ENCODE measurements at regions of chrX and their contacts with region 1.

Region 1: DNA sequence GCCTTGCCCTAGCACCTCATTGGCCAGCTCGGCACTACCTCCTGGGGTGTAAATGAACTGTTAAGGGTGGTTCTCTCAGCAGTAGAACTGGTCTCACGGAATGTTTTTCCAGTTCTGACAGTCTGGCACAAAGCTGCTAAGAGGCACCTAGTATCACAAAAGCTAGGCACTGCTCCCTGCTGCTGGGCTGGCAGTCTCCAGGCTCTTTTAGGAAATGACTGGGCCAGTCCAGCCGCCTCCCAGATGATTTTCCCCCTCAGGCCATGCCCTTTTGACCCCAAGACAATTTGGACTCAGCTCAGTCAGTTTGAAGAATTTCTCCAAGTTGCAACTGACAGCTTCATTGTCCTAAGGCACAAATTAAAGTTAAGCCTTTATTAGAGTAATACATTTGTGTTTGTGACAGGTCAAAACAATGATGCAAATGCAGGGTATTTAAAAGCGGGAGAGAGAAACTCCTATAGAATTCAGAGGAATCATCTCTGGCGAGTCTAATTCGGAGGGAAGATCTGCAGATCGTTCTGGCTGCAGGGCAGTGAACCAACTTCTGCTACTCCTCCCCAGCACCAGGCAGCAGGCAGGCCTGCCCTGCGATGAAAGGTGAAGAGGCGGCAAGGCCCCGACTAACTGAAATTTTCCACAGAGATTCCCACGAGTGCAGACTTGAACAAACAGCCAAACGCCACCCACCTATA is 7.9 kb downstream of the FRMD7 start:
- DNase-seq: no peak
- H3K4me3 ChIP-seq: no peak overlapping the region
- H3K27ac ChIP-seq: no peak overlapping the region
- H3K4me1 ChIP-seq: no peaks in the 10 kb centered on the region
- H3K27me3 ChIP-seq: no peaks in the 10 kb centered on the region
- CTCF ChIP-seq: no peak
- EP300 ChIP-seq: no peak
- POLR2A ChIP-seq: no peak

Region 2: DNA sequence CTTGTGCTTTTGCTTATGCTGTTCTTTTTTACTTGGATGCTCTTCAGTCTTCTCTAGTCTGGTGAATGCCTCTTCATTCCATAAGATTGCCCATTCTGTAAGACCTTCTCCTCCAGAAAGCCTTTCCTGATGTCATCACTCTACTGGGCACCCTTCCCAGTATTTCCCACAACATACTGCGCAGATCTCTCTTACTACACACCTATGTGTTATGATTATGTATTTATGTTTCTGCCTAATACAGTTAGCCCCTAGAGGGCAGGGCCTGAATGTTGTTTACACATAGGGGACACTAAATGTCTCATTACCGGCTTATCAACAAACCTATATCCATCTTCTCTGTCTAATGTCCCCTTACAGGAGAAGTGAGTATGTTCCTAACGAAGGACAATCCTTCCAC is 1975.5 kb before region 1 on chrX:
- intact Hi-C with region 1: loop called in 1 of 4 experiments (anchors 5 kb)
- DNase-seq: no peak
- H3K4me3 ChIP-seq: no peak overlapping the region
- H3K27ac ChIP-seq: no peak overlapping the region
- H3K4me1 ChIP-seq: no peaks in the 10 kb centered on the region
- H3K27me3 ChIP-seq: no peaks in the 10 kb centered on the region
- CTCF ChIP-seq: no peak
- EP300 ChIP-seq: no peak
- POLR2A ChIP-seq: no peak

Measured in ovary (tissue), 10 donors.